OCI-LY7 (cell line): ENCODE measurements at regions of chr19 and their contacts with region 1.

Region 1: GRCh38 chr19:17385878-17386611 is 8.0 kb downstream of the CCDC194 start:
- DNase-seq: peak; percentile 74
- H3K4me3 ChIP-seq: no peak overlapping the region
- H3K27ac ChIP-seq: no peak overlapping the region
- H3K4me1 ChIP-seq: peaks cover 34% of the 10 kb centered on the region
- CTCF ChIP-seq: peak; percentile 93

Region 2: GRCh38 chr19:17292286-17293097 is 93.6 kb before region 1 on chr19:
- CTCF ChIA-PET with region 1: no interaction called
- POLR2A ChIA-PET with region 1: no interaction called
- intact Hi-C with region 1: loop called (anchors 1 kb)
- DNase-seq: peak; percentile 87
- H3K4me3 ChIP-seq: peak overlapping the region; percentile 77
- H3K27ac ChIP-seq: peak overlapping the region; percentile 63
- H3K4me1 ChIP-seq: peaks cover 27% of the 10 kb centered on the region
- CTCF ChIP-seq: peak; percentile 78

Region 3: DNA sequence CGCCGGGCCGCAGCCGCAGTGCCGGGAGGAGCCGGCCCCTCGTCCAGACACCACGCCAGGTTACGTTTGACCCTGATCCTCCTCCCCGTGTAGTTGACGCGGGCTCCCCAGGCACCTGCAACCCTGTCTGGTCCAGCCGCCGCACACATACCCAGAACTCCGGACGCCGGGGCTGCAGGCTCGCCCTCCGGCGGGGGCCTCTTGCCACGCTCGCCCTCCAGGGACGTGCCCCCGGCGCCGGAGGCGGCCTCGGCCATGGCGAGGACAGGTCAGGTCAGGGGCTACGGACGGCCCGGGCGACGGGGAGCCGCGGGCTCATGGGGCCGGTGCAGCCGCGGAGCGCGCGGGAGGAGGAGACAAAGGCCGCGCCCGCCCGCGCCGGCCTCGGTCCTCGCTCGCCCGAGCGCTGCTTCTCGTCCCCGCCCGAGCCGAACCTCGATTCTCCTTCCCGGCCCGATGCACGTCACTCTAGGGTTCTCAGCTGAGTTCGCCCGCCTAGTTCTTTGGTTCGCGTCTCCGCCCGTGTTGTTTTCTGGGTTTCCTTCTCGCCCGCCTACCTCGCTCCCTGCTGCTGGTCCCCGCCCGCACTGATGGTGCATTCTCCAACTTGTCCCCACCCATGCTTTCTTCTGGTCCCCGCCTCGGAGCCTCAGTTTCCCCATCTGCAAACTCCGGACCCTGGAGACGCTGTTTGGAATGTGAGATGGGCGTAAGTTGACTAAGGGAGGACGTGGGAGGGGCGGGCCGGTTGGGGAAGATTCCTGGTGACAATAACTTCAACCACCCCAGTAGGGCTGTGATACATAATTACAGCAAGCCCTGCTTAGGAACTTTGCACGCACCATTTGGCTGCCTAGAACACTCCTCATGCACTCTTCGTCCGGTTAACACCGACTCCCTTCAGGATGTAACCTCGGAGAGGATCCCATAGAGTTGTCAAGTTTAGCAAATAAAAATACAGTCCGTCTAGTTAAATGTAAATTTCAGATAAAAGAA is 51.3 kb before region 1 on chr19 and contains the start of gene ANO8:
- CTCF ChIA-PET with region 1: no interaction called
- POLR2A ChIA-PET with region 1: no interaction called
- intact Hi-C with region 1: no loop called
- DNase-seq: peak; percentile 98
- H3K4me3 ChIP-seq: peak within 1 kb of the TSS; percentile 86
- H3K27ac ChIP-seq: peak within 1 kb of the TSS; percentile 38
- H3K4me1 ChIP-seq: peaks cover 39% of the 10 kb centered on the region
- CTCF ChIP-seq: no peak
- total RNA-seq, gene ANO8: 4.3 and 5.9 TPM in 2 replicates

Region 4: GRCh38 chr19:17346109-17346671 is 39.9 kb before region 1 on chr19:
- CTCF ChIA-PET with region 1: no interaction called
- POLR2A ChIA-PET with region 1: no interaction called
- intact Hi-C with region 1: loop called (anchors 1 kb)
- DNase-seq: peak; percentile 75
- H3K4me3 ChIP-seq: no peak overlapping the region
- H3K27ac ChIP-seq: no peak overlapping the region
- H3K4me1 ChIP-seq: peaks cover 25% of the 10 kb centered on the region
- CTCF ChIP-seq: peak; percentile 88